GM13976 (cell line): ENCODE measurements at regions of chr12 and their contacts with region 1.

Region 1: DNA sequence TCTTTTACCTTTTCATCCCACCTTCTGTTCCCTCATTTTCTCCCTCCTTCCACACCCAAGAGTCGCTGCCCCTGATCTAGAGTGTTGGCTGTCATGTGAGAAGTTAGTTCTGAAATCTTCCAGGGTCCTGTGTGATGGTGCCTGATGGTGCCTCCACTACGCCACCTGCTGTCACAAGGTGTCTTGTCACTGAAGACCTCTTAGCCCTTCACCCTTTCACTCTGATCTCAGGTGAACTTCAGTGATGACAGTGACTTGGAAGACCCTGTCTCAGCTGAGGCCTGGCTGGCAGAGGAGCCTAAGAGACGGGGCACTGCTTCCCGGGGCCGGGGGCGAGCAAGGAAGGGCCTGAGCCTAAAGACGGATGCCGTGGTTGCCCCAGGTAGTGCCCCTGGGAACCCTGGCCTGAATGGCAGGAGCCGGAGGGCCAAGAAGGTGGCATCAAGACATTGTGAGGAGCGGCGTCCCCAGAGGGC is 7.6 kb upstream of the PFDN5 start:
- DNase-seq: peak; percentile 83
- CTCF ChIP-seq: peak; percentile 61

Region 2: GRCh38 chr12:53159195-53159839 is 128.5 kb before region 1 on chr12:
- in situ Hi-C with region 1: loop called (anchors 10 kb)
- DNase-seq: peak; percentile 95
- CTCF ChIP-seq: peak; percentile 99

Region 3: GRCh38 chr12:53180220-53180930 is 107.4 kb before region 1 on chr12 and contains the starts of genes CSAD and ZNF740:
- in situ Hi-C with region 1: no loop called
- DNase-seq: peak; percentile 99
- CTCF ChIP-seq: no peak

Region 4: GRCh38 chr12:53213348-53213747 is 74.4 kb before region 1 on chr12:
- in situ Hi-C with region 1: loop called (anchors 5 kb)
- DNase-seq: peak; percentile 84
- CTCF ChIP-seq: peak; percentile 90

Region 5: DNA sequence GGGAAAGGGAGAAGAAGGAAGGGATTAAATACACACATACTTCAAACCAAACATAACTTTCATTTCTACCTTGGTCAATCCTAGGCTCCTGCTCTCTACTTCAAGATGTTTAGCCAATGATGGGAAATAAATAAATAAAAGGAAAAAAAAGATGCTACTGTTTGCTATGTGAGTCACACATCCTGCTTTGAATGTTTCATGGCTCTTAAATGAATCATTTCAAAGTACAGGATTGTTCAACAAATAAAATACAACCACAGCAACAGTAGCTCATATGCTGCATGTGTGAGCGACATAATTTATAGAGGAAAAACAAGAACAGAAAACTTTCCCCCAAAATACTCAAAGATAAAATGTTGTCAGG is 273.8 kb after region 1 on chr12:
- in situ Hi-C with region 1: no loop called
- DNase-seq: no peak
- CTCF ChIP-seq: no peak